ENCODE measurements at regions of chr1 and their contacts with region 1.

Region 1: DNA sequence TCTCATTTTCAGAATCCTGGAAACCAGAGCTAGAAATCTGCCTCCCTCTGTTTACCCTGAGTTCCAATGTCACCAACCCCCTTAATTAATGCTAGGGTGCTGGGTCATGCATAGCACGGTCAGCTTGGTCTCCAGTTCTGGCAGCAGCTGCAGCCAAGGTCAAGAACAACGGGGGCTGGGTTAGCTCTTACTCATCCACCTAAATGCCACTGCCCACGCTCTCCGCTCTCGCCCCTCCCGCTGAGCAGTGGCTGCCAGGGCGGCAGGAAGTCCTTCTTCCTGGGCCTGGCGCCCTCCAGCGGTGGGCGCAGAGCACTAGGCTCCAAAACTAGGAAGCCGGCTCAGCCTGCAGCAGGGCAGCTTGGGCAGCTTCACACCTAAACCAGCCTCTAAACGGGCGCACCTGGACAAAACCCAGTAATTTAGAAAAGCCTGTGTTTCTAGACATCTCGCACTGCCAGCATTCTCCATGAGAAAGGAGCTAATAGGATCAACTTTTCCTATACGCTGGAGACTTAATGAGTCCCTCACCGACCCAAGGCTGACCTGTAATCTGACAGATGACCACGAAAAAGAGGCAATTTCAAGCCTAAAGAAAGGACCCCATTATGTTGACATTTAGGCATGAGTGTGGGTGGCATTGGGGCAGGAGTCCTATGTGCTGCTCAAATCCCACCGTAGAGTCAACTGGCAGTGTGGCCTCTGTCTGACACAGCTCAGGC is 78.3 kb upstream of the LRRN2 start:
- DNase-seq: peak; percentile 40
- ATAC-seq: peak; percentile 99
- H3K4me3 ChIP-seq: no peak overlapping the region
- H3K27ac ChIP-seq: no peak overlapping the region
- H3K4me1 ChIP-seq: 0 out of 2 replicates have a peak, but pooled peaks cover 4% of the 10 kb centered on the region
- H3K27me3 ChIP-seq: peaks cover 0 to 1% of the 10 kb centered on the region in 2 experiments; a peak in 1 of 4 replicates
- CTCF ChIP-seq: peak; percentile 88 to 93 (median 92)
- EP300 ChIP-seq: no peak
- POLR2A ChIP-seq: no peak
- RAD21 ChIP-seq: peak; percentile 75

Region 2: DNA sequence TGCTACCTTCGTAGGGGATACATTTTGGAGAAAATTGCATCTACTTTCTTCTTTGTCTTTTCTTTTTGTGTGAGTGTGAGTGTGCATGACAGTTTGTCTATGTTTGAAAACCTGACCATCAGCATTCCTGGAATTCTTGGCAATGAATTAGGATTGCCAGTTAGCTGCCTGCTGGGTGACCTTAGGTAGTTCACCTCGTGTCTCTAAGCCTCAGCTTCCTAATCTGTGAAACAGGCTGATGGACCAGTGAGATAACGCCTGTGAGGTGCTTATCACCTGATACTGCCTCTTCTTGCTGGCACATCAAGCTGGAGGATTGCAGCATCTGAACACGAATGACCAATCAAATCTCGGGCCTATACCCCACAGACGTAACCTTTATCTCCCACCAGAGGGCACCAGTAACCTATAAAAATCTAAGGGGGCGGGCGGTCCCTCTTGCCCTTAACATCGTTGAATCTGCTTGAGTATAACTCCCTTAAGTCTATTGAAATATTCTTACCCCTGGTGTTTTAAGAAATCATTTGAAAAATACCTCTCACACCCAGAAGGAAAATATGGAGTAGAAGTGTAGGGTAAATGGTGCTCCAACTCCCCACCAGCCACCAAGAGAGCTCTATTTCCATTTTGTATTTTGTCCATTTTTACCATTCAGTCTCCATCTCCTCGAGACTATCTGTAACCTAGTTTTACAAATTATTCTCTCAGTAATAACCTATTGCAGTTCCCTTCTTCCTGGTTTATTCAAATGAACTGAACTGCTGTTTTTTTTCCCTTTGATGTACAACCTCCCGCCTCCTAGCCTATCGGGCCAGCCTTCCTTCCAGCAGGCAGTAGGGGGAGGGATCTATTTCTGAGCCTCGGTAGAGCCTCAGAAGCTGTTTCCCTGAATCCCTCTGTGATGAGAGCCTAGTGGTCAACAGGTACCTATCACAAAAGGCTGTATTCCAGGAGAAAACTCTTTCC is 198.0 kb before region 1 on chr1:
- CTCF ChIA-PET with region 1: interaction called, 138 read pairs
- POLR2A ChIA-PET with region 1: no interaction called
- RAD21 ChIA-PET with region 1: interaction called, 61 read pairs
- SMC1A ChIA-PET with region 1: interaction called, 85 read pairs
- in situ Hi-C with region 1: loop called (anchors 5 kb)
- intact Hi-C with region 1: loop called (anchors 1 kb)
- DNase-seq: no peak
- ATAC-seq: peak; percentile 87
- H3K4me3 ChIP-seq: no peak overlapping the region
- H3K27ac ChIP-seq: peak overlapping the region; percentile 45
- H3K4me1 ChIP-seq: peaks cover 24% of the 10 kb centered on the region
- H3K27me3 ChIP-seq: no peaks in the 10 kb centered on the region
- CTCF ChIP-seq: peak; percentile 58 to 78 (median 72)
- EP300 ChIP-seq: no peak
- POLR2A ChIP-seq: no peak
- RAD21 ChIP-seq: peak; percentile 78

Region 3: DNA sequence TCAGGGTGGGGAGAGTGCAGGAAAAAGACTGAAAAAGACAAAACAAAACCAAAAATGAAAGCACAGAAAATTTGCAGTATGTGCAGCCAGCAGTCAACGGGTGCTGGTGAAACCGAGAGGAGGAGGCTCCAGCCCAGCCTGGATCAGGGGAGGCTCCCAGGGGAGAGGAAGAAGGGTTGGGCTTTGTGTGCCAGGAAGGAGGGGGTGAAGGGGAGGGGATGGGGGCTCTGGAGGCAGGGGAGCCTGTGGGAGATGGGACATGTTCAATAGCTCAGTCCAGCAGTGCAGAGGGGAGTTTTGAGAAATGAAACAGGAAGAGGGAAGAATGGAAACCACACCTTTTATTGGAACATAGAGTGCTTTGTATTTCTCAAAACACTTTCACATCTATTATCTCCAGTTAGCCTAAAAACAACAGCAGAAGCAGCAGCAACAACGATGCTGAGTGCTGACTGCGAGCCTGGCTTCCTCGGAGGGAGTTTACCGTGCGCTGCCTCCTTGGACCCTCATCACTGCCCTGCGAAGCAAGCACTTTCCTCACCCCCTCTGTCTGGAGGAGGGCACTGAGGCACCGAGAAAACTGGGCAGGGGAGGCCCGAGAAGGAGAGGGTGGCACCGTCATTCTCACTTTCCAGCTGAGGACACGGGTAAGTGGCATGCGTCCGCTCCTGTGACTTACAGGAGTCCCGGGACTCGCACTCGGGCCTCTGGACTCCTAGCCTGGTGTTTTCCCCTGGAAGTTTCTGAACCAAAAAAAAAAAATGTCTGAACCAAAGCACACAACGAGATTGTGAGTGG is 184.8 kb before region 1 on chr1:
- CTCF ChIA-PET with region 1: interaction called, 29 read pairs
- POLR2A ChIA-PET with region 1: interaction called, 4 read pairs
- RAD21 ChIA-PET with region 1: interaction called, 13 read pairs
- SMC1A ChIA-PET with region 1: interaction called, 23 read pairs
- in situ Hi-C with region 1: no loop called
- intact Hi-C with region 1: no loop called
- DNase-seq: peak; percentile 65
- ATAC-seq: peak; percentile 89
- H3K4me3 ChIP-seq: peak overlapping the region; percentile 52; the same call in 1 of the 2 replicates
- H3K27ac ChIP-seq: peak overlapping the region; percentile 52
- H3K4me1 ChIP-seq: peaks cover 23% of the 10 kb centered on the region
- H3K27me3 ChIP-seq: no peaks in the 10 kb centered on the region
- CTCF ChIP-seq: no peak
- EP300 ChIP-seq: peak in 1 of 2 experiments; percentile 69; a peak in 2 of 4 replicates
- POLR2A ChIP-seq: peak; percentile 37
- RAD21 ChIP-seq: no peak

Region 4: GRCh38 chr1:204697893-204698292 is 66.0 kb before region 1 on chr1:
- CTCF ChIA-PET with region 1: interaction called, 10 read pairs
- POLR2A ChIA-PET with region 1: no interaction called
- RAD21 ChIA-PET with region 1: no interaction called
- SMC1A ChIA-PET with region 1: interaction called, 3 read pairs
- in situ Hi-C with region 1: no loop called
- intact Hi-C with region 1: no loop called
- DNase-seq: no peak
- ATAC-seq: no peak
- H3K4me3 ChIP-seq: no peak overlapping the region
- H3K27ac ChIP-seq: no peak overlapping the region
- H3K4me1 ChIP-seq: no peaks in the 10 kb centered on the region
- H3K27me3 ChIP-seq: peaks cover 1 to 2% of the 10 kb centered on the region in 2 experiments; a peak in 2 of 4 replicates
- CTCF ChIP-seq: no peak
- EP300 ChIP-seq: no peak
- POLR2A ChIP-seq: no peak
- RAD21 ChIP-seq: no peak

Region 5: GRCh38 chr1:204726478-204726877 is 37.4 kb before region 1 on chr1:
- CTCF ChIA-PET with region 1: interaction called, 19 read pairs
- POLR2A ChIA-PET with region 1: no interaction called
- RAD21 ChIA-PET with region 1: no interaction called
- SMC1A ChIA-PET with region 1: interaction called, 5 read pairs
- in situ Hi-C with region 1: no loop called
- intact Hi-C with region 1: no loop called
- DNase-seq: no peak
- ATAC-seq: peak; percentile 74
- H3K4me3 ChIP-seq: no peak overlapping the region
- H3K27ac ChIP-seq: no peak overlapping the region
- H3K4me1 ChIP-seq: no peaks in the 10 kb centered on the region
- H3K27me3 ChIP-seq: no peaks in the 10 kb centered on the region; a peak in 1 of 4 replicates
- CTCF ChIP-seq: no peak
- EP300 ChIP-seq: no peak
- POLR2A ChIP-seq: no peak
- RAD21 ChIP-seq: no peak

Region 6: DNA sequence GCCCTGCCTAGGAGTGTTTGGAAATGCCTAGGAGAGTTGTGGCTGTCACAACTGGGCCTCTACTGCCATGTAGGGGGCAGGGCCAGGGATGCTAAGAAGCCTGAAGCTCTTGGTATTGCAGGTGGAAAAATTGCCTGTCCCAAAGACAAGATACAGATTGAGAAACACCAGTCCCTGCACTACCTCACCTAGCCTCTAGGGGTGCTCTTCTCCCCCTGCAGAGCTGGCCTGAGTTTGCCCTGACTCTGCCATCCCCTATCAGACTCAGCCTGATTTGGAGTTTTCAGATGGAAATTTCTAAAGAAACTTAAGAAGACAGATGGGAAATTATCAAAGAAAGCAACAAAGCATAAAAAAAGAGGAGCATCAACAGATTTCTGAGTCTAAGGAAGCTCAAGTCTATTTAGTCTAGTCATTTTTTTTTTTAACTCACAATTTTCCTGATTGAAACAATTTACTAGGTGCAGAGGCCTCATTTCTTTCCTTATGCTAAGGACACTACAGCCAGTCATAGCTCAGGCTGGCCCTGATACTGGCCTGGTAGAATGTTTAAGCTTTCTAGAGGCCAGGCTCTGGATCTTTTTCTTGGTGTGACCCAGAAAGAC is 16.9 kb before region 1 on chr1:
- CTCF ChIA-PET with region 1: interaction called, 134 read pairs
- POLR2A ChIA-PET with region 1: no interaction called
- RAD21 ChIA-PET with region 1: interaction called, 4 read pairs
- SMC1A ChIA-PET with region 1: interaction called, 10 read pairs
- in situ Hi-C with region 1: no loop called
- intact Hi-C with region 1: no loop called
- DNase-seq: no peak
- ATAC-seq: peak; percentile 94
- H3K4me3 ChIP-seq: no peak overlapping the region
- H3K27ac ChIP-seq: no peak overlapping the region
- H3K4me1 ChIP-seq: no peaks in the 10 kb centered on the region
- H3K27me3 ChIP-seq: peaks cover 0 to 1% of the 10 kb centered on the region in 2 experiments; a peak in 1 of 4 replicates
- CTCF ChIP-seq: peak; percentile 78 to 97 (median 97)
- EP300 ChIP-seq: no peak
- POLR2A ChIP-seq: no peak
- RAD21 ChIP-seq: peak; percentile 48

Region 7: DNA sequence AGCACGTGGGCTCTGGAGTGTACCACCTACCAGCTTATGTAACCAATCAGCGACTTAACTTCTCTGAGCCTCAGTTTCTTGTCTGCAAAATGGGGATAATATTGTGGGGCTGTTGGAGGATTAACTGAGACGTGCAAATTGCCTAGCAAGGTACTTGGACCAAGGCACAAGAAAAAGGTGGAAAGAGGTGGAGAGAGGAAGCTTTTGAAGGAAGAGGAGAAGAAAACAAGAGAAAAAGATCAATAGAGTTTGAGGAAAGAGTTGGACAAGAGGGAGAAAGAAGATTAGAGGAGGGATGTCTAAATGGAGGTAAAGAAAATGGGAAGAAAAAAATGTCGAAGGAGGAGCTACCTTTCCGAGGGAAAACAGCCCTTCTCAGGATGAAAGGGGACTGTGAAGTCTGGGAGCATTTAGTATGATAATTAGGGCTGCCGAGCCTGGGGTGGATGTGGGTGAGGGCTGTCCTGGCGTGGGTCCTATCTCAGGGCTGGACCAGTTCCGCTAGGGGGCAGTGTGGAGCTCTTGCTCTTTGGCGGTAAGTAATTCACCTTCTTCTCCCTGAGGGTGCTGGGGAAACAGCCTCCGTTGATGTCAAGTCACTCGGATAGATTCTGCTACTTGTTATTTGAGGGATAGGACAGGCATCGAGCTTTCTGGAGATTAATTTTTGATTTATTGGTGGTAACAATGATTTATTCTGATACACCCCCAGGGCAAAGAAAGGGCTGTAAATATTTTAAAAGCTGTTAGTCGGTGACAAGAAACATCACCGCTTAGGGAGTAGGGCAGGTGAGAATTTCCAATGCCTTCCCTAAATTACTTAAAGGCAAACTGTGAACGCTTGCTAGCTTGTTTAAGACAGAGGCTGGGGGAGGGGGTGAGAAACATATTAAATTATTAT is 27.8 kb after region 1 on chr1:
- CTCF ChIA-PET with region 1: interaction called, 12 read pairs
- POLR2A ChIA-PET with region 1: no interaction called
- RAD21 ChIA-PET with region 1: interaction called, 4 read pairs
- SMC1A ChIA-PET with region 1: no interaction called
- in situ Hi-C with region 1: no loop called
- intact Hi-C with region 1: no loop called
- DNase-seq: no peak
- ATAC-seq: peak; percentile 96
- H3K4me3 ChIP-seq: no peak overlapping the region
- H3K27ac ChIP-seq: no peak overlapping the region
- H3K4me1 ChIP-seq: no peaks in the 10 kb centered on the region
- H3K27me3 ChIP-seq: peaks cover 3 to 4% of the 10 kb centered on the region in 2 experiments; a peak in 1 of 4 replicates
- CTCF ChIP-seq: peak; percentile 62 to 87 (median 87)
- EP300 ChIP-seq: no peak
- POLR2A ChIP-seq: no peak
- RAD21 ChIP-seq: no peak